Ovary (tissue), 10 donors: ENCODE measurements at regions of chr19 and their contacts with region 1.

Region 1: DNA sequence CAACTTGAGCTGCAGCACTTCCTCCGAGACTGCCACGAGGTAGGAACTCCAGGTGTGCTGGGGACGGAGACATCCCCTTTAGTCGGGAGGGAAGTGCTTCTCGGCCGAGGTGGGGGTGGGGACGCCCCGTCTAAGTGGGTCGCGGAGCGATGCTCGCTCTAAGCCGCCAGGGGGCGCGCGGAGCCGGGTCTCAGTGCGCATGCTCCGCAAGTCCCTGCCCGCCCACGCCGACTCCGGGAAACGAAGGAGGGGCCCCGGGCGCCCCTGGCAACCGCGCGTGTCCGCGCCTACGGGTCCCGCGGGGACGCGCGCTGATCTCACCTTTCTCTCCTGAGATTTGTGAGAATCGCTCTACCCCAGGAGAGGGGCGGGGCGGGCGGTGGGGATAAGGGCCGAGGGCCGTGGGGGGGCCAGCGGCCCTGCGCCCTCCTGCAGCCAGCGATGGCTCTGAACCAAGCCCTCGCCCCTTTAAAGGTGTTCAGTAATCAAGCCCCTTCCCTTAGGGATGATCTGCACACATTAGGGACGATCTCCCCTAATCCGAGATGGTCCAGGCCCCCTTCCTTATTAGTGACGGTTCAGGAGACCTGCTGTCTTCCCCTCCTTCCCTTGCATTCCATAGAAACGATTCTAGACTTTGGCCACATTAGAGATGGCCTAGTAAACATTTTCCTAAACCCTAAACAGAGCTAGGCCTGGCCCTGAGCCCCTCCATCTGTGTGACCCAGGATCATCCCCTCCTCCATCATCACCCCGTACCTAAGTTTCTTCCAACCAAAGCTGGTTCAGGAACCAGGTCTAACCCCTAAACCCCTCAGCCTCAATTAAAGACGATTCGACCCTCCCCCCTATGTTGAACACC is 47.3 kb upstream of the SHKBP1 start:
- DNase-seq: peak; percentile 80 to 92 (median 88)
- H3K4me3 ChIP-seq: peak overlapping the region; percentile 39
- H3K27ac ChIP-seq: no peak overlapping the region
- H3K4me1 ChIP-seq: no peaks in the 10 kb centered on the region
- H3K27me3 ChIP-seq: no peaks in the 10 kb centered on the region
- CTCF ChIP-seq: peak; percentile 93 to 98 (median 98)
- EP300 ChIP-seq: no peak
- POLR2A ChIP-seq: no peak

Region 2: GRCh38 chr19:40598121-40598917 is 69.0 kb after region 1 on chr19:
- intact Hi-C with region 1: loop called (anchors 5 to 10 kb)
- DNase-seq: peak; percentile 87 to 95 (median 94)
- H3K4me3 ChIP-seq: peak overlapping the region; percentile 38
- H3K27ac ChIP-seq: peak overlapping the region; percentile 63 to 70
- H3K4me1 ChIP-seq: peaks cover 4% of the 10 kb centered on the region
- H3K27me3 ChIP-seq: no peaks in the 10 kb centered on the region
- CTCF ChIP-seq: peak; percentile 97 to 98 (median 98)
- EP300 ChIP-seq: no peak
- POLR2A ChIP-seq: peak; percentile 54